ENCODE measurements at regions of chr11 and their contacts with region 1.

Region 1: GRCh38 chr11:8989453-8989852 is 14.3 kb downstream of the NRIP3 start:
- DNase-seq: no peak

Region 2: GRCh38 chr11:9095421-9095820 is 106.0 kb after region 1 on chr11:
- CTCF ChIA-PET with region 1: interaction called, 10 read pairs
- POLR2A ChIA-PET with region 1: no interaction called
- DNase-seq: no peak